ENCODE measurements at regions of chr2 and their contacts with region 1.

Region 1: GRCh38 chr2:122433123-122433754 is 677.8 kb downstream of the TSN start:
- DNase-seq: peak; percentile 30 to 62 (median 53)
- ATAC-seq: peak; percentile 99 to 100 (median 100)
- H3K4me3 ChIP-seq: no peak overlapping the region
- H3K27ac ChIP-seq: no peak overlapping the region
- H3K4me1 ChIP-seq: peaks cover 0 to 9% (median 2%) of the 10 kb centered on the region in 4 donors
- H3K27me3 ChIP-seq: no peaks in the 10 kb centered on the region
- CTCF ChIP-seq: no peak
- POLR2A ChIP-seq: no peak

Region 2: DNA sequence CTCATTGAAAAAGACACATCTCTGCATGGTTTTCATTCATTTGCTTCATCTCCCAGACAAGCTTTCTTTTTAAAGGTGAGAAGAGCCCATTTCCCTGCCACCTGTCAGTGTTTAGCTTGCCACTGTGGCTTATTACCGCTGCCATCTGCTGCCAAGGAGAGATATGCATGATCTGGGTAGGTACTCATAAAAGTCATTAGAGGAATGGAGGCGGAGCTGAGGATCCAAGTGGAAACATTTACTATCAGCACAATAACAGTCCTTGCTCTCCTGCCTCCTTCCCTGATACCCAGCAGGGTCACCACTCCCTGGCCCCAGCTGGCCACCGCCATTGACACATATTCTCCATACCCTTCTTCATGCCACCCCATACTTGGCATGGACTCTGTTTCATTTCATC is 287.4 kb before region 1 on chr2:
- intact Hi-C with region 1: no loop called
- DNase-seq: no peak
- ATAC-seq: no peak
- H3K4me3 ChIP-seq: no peak overlapping the region
- H3K27ac ChIP-seq: no peak overlapping the region
- H3K4me1 ChIP-seq: no peaks in the 10 kb centered on the region
- H3K27me3 ChIP-seq: no peaks in the 10 kb centered on the region
- CTCF ChIP-seq: no peak
- POLR2A ChIP-seq: no peak

Region 3: GRCh38 chr2:122340246-122340645 is 93.0 kb before region 1 on chr2:
- intact Hi-C with region 1: no loop called
- DNase-seq: no peak
- ATAC-seq: no peak
- H3K4me3 ChIP-seq: no peak overlapping the region
- H3K27ac ChIP-seq: no peak overlapping the region
- H3K4me1 ChIP-seq: no peaks in the 10 kb centered on the region
- H3K27me3 ChIP-seq: no peaks in the 10 kb centered on the region
- CTCF ChIP-seq: no peak
- POLR2A ChIP-seq: no peak

Region 4: GRCh38 chr2:122500316-122501105 is 67.3 kb after region 1 on chr2:
- intact Hi-C with region 1: no loop called
- DNase-seq: no peak
- ATAC-seq: no peak
- H3K4me3 ChIP-seq: no peak overlapping the region
- H3K27ac ChIP-seq: no peak overlapping the region
- H3K4me1 ChIP-seq: no peaks in the 10 kb centered on the region
- H3K27me3 ChIP-seq: no peaks in the 10 kb centered on the region
- CTCF ChIP-seq: no peak
- POLR2A ChIP-seq: no peak

Region 5: GRCh38 chr2:122748552-122749011 is 315.3 kb after region 1 on chr2:
- intact Hi-C with region 1: loop called in 1 of 2 experiments (anchors 10 kb)
- DNase-seq: peak in 1 of 3 donors; percentile 50
- ATAC-seq: peak; percentile 86 to 95 (median 89)
- H3K4me3 ChIP-seq: no peak overlapping the region
- H3K27ac ChIP-seq: peak overlapping the region in 2 of 3 donors; percentile 12 to 13
- H3K4me1 ChIP-seq: peaks cover 0 to 13% (median 1%) of the 10 kb centered on the region in 4 donors
- H3K27me3 ChIP-seq: no peaks in the 10 kb centered on the region
- CTCF ChIP-seq: peak; percentile 8 to 40 (median 26)
- POLR2A ChIP-seq: no peak

Region 6: GRCh38 chr2:122843503-122843902 is 410.3 kb after region 1 on chr2:
- intact Hi-C with region 1: no loop called
- DNase-seq: no peak
- ATAC-seq: peak in 2 of 4 donors; percentile 32 to 87
- H3K4me3 ChIP-seq: no peak overlapping the region
- H3K27ac ChIP-seq: no peak overlapping the region
- H3K4me1 ChIP-seq: no peaks in the 10 kb centered on the region
- H3K27me3 ChIP-seq: no peaks in the 10 kb centered on the region
- CTCF ChIP-seq: no peak
- POLR2A ChIP-seq: no peak

Measured in right lobe of liver (tissue), 6 donors.